ENCODE measurements at regions of chr3 and their contacts with region 1.

Region 1: DNA sequence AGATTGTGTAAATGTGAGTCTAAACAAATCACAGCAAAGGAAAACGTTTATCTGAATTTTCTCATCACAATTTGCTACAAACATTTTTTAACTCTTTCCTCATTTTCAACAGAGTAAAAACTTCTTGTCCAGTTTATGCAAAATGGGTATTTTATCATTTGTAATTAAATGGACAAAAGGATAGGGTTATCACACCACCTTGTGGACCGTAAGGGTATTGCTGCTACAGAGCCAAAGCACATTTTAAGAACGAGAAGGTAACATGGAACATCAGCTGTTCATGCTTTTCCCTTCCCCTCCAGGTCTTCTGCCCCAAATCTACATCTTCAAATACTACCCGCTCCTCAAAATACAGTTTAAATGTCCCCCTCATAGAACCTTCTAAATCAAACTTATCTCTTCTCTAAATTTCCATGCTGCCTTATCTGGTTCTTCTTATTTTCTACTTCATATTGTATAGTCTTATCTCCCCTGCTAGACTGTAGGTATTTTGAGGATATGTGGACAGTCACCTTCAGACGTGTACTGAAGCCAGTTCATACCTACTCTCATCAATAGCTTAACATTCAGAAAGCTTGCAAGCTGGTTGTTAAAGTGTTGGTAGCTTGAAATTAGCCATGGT is 12.8 kb upstream of the SETMAR start:
- DNase-seq: peak in 1 of 6 donors; percentile 46
- ATAC-seq: peak in 3 of 4 donors; percentile 79 to 89 (median 86)
- H3K4me3 ChIP-seq: no peak overlapping the region
- H3K27ac ChIP-seq: no peak overlapping the region
- H3K4me1 ChIP-seq: no peaks in the 10 kb centered on the region
- H3K27me3 ChIP-seq: no peaks in the 10 kb centered on the region
- CTCF ChIP-seq: peak; percentile 77 to 90 (median 85)

Region 2: GRCh38 chr3:3191675-3192285 is 1098.6 kb before region 1 on chr3:
- intact Hi-C with region 1: loop called in 1 of 3 experiments (anchors 5 kb)
- DNase-seq: no peak
- ATAC-seq: peak in 3 of 4 donors; percentile 37 to 56 (median 54)
- H3K4me3 ChIP-seq: no peak overlapping the region
- H3K27ac ChIP-seq: no peak overlapping the region
- H3K4me1 ChIP-seq: no peaks in the 10 kb centered on the region
- H3K27me3 ChIP-seq: no peaks in the 10 kb centered on the region
- CTCF ChIP-seq: no peak